ENCODE measurements at regions of chr1 and their contacts with region 1.

Region 1: GRCh38 chr1:101065575-101065974 is 40.0 kb upstream of the DPH5 start:
- DNase-seq: no peak
- H3K4me3 ChIP-seq: no peak overlapping the region
- H3K4me3 Mint-ChIP-seq: peak overlapping the region in 7 of 8 donors; percentile 8 to 74 (median 64)
- H3K27ac ChIP-seq: no peak overlapping the region
- H3K27ac Mint-ChIP-seq: peak overlapping the region; percentile 64 to 93 (median 85)
- H3K4me1 ChIP-seq: peaks cover 42% of the 10 kb centered on the region
- H3K4me1 Mint-ChIP-seq: peaks cover 35 to 57% (median 44%) of the 10 kb centered on the region in 4 donors
- H3K27me3 ChIP-seq: no peaks in the 10 kb centered on the region
- H3K27me3 Mint-ChIP-seq: no peaks in the 10 kb centered on the region

Region 2: DNA sequence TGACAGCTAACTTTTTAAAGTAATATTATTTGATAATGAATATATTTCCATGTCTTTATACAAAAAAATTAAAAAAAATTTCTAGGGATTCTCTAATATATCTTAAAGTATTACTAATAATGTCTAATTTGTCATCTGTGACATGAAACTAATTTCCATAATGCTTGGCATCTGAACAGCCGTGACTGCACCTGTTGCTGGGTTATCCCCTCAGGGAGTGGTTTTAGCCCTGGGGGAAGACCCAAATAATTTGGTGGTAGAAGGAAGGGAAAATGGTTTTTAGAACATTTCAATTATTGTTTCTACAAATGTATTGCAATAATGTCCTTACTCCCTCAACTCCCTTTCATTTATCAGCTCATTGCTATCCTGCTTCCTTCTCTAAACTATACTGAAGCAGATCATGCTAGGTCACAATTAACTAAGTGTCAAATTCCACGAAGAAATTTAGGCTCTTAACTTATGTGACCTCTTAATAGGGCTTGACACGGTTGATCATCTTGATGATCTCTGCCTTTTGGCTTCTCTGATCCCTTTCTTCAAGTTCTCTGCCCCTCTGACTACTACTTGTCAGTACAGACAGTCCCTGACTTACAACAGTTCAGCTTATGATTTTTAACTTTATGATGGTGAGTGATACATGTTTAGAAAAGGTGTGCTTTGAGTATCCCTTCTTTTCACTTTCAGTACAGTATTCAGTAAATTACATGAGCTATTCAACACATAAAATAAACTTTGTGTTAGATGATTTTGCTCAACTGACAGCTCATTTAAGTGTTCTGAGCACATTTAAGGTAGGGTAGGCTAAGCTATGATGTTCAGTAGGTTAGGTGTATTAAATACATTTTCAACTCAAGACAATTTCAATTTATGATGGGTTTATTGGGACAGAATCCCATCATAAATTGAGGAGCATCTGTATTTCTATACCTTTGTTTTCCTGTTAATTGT is 13.6 kb before region 1 on chr1:
- CTCF ChIA-PET with region 1: interaction called, 7 read pairs
- POLR2A ChIA-PET with region 1: interaction called, 6 read pairs
- intact Hi-C with region 1: loop called (anchors 2 kb)
- DNase-seq: no peak
- H3K4me3 ChIP-seq: no peak overlapping the region
- H3K4me3 Mint-ChIP-seq: no peak overlapping the region
- H3K27ac ChIP-seq: no peak overlapping the region
- H3K27ac Mint-ChIP-seq: peak overlapping the region in 4 of 7 donors; percentile 29 to 63 (median 48)
- H3K4me1 ChIP-seq: no peaks in the 10 kb centered on the region
- H3K4me1 Mint-ChIP-seq: peaks cover 12 to 21% (median 18%) of the 10 kb centered on the region in 4 donors
- H3K27me3 ChIP-seq: no peaks in the 10 kb centered on the region
- H3K27me3 Mint-ChIP-seq: no peaks in the 10 kb centered on the region

Region 3: GRCh38 chr1:102282955-102283354 is 1217.4 kb after region 1 on chr1:
- CTCF ChIA-PET with region 1: no interaction called
- POLR2A ChIA-PET with region 1: no interaction called
- intact Hi-C with region 1: no loop called
- DNase-seq: no peak
- H3K4me3 ChIP-seq: no peak overlapping the region
- H3K4me3 Mint-ChIP-seq: no peak overlapping the region
- H3K27ac ChIP-seq: no peak overlapping the region
- H3K27ac Mint-ChIP-seq: no peak overlapping the region
- H3K4me1 ChIP-seq: no peaks in the 10 kb centered on the region
- H3K4me1 Mint-ChIP-seq: no peaks in the 10 kb centered on the region
- H3K27me3 ChIP-seq: no peaks in the 10 kb centered on the region
- H3K27me3 Mint-ChIP-seq: no peaks in the 10 kb centered on the region